Activated CD8-positive, alpha-beta T cell treated with anti-CD3 and anti-CD28 coated beads for 36 hours (primary cell): ENCODE measurements at regions of chr7 and their contacts with region 1.

Region 1: GRCh38 chr7:100611974-100612729 is at the start of gene MOSPD3:
- DNase-seq: peak; percentile 99
- ATAC-seq: peak; percentile 94
- H3K4me3 Mint-ChIP-seq: peak within 1 kb of the TSS; percentile 88
- H3K27ac Mint-ChIP-seq: peak within 1 kb of the TSS; percentile 100
- H3K4me1 Mint-ChIP-seq: peaks cover 9% of the 10 kb centered on the region
- H3K27me3 Mint-ChIP-seq: no peaks in the 10 kb centered on the region
- CTCF ChIP-seq: no peak
- total RNA-seq, gene MOSPD3: 9.6 to 10.5 TPM

Region 2: GRCh38 chr7:100509231-100509630 is 102.9 kb before region 1 on chr7:
- CTCF ChIA-PET with region 1: no interaction called
- POLR2A ChIA-PET with region 1: no interaction called
- intact Hi-C with region 1: no loop called
- DNase-seq: no peak
- ATAC-seq: no peak
- H3K4me3 Mint-ChIP-seq: no peak overlapping the region
- H3K27ac Mint-ChIP-seq: no peak overlapping the region
- H3K4me1 Mint-ChIP-seq: no peaks in the 10 kb centered on the region
- H3K27me3 Mint-ChIP-seq: no peaks in the 10 kb centered on the region
- CTCF ChIP-seq: no peak

Region 3: DNA sequence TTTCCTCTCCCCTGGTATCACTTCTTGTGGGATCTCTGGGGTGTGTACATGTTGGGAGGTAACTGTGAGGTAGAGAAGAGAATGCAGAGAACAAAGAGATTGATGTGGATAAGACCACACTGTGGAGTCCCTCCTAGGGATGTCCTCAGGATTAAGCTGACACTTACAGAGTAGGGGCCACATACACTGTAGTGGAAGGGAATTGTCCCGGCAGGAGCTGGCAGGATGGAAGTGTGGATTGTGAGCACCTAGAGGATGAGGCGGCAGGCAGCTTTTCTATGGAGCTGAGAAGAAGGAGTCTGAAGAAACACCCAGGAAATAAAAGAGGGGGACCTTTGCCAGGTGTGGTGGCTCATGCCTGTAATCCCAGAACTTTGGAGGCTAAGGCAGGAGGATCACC is 59.6 kb before region 1 on chr7:
- CTCF ChIA-PET with region 1: no interaction called
- POLR2A ChIA-PET with region 1: no interaction called
- intact Hi-C with region 1: no loop called
- DNase-seq: no peak
- ATAC-seq: no peak
- H3K4me3 Mint-ChIP-seq: no peak overlapping the region
- H3K27ac Mint-ChIP-seq: peak overlapping the region; percentile 52
- H3K4me1 Mint-ChIP-seq: peaks cover 38% of the 10 kb centered on the region
- H3K27me3 Mint-ChIP-seq: no peaks in the 10 kb centered on the region
- CTCF ChIP-seq: no peak

Region 4: DNA sequence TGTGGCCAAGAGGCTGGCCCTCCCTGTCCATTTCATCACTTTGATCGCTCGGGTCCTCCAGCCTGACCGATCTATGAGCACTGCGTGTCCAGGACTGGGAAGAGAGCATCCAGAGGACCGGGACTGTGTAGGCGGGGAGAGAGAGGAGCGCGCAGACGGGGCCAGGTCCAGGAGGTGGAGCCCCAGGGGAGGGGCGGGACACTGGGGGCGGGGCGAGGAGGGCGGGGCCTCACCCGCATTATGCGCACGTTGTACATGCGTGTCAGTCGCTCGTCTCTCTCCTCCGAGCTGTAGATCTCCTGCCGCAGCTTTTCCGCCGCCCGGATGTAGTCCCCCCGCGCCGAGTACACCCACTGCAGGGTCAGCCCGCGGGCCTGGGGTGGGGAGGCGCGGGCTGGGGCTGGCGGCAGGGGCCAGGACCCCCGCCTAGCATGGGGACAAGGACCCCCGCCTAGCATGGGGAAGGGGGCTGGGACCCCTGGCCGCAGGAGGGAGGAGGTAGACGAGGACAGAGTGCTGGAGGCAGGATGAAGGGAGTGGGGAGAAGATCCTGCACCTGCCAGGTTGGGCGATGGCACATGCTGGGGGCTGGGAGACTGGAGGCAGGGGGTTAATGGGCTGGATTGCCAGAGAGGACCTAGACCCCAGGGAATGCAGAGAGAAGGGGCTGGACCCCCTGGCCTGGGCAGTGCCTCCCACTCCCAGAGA is 14.5 kb after region 1 on chr7:
- CTCF ChIA-PET with region 1: interaction called, 13 read pairs
- POLR2A ChIA-PET with region 1: interaction called, 6 read pairs
- intact Hi-C with region 1: no loop called
- DNase-seq: peak; percentile 93
- ATAC-seq: peak; percentile 97
- H3K4me3 Mint-ChIP-seq: peak overlapping the region; percentile 72
- H3K27ac Mint-ChIP-seq: peak overlapping the region; percentile 81
- H3K4me1 Mint-ChIP-seq: peaks cover 23% of the 10 kb centered on the region
- H3K27me3 Mint-ChIP-seq: no peaks in the 10 kb centered on the region
- CTCF ChIP-seq: no peak

Region 5: DNA sequence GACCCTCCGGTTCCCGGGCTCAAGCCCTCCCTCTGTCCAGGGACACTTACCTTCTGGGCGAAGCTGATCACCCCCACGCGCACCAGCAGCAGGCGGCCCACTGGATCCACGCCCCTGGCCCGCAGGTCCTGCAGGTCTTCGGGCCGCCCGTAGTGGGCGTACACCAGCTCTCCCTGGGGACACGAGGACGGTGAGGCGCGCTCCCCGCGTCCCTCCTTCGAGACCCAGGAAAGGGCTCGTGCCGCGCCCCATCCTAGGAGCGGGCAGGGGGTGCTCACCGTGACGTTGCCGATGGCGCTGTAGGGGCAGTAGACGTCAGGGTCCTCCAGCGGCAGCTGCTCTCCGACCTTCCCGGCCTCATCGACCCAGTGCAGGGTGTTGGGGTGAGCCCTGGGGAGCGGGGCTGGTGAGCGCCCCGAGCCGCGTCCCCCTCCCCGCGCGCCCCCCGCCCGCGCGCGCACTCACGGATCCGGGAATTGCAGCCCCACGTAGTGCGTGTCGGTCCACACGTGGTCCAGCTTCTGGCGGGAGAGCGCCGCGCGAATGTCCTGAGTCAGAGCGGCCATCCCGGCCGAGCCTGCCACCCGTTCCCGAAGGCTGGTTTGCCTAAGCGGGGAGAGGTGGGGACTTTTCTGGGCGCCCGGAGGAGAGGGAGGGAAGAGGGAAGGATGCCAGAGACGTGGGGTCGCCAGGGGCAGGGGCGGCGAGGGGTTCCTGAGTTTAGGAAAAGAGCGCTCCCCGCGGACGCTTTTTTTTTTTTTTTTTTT is 21.0 kb after region 1 on chr7:
- CTCF ChIA-PET with region 1: interaction called, 19 read pairs
- POLR2A ChIA-PET with region 1: interaction called, 5 read pairs
- intact Hi-C with region 1: no loop called
- DNase-seq: peak; percentile 73
- ATAC-seq: peak; percentile 77
- H3K4me3 Mint-ChIP-seq: peak overlapping the region; percentile 82
- H3K27ac Mint-ChIP-seq: peak overlapping the region; percentile 93
- H3K4me1 Mint-ChIP-seq: peaks cover 23% of the 10 kb centered on the region
- H3K27me3 Mint-ChIP-seq: peaks cover 4% of the 10 kb centered on the region
- CTCF ChIP-seq: peak; percentile 51